Right cardiac atrium (tissue), 5 donors: ENCODE measurements at regions of chr10 and their contacts with region 1.

Region 1: GRCh38 chr10:18214691-18215563 is 74.7 kb downstream of the CACNB2 start:
- DNase-seq: peak in 2 of 3 donors; percentile 16 to 42
- ATAC-seq: peak; percentile 68 to 69
- H3K4me3 ChIP-seq: no peak overlapping the region
- H3K27ac ChIP-seq: no peak overlapping the region
- H3K4me1 ChIP-seq: peaks cover 1% of the 10 kb centered on the region
- H3K27me3 ChIP-seq: no peaks in the 10 kb centered on the region

Region 2: GRCh38 chr10:17847585-17848296 is 367.2 kb before region 1 on chr10:
- intact Hi-C with region 1: loop called (anchors 5 to 10 kb)
- DNase-seq: no peak
- ATAC-seq: no peak
- H3K4me3 ChIP-seq: no peak overlapping the region
- H3K27ac ChIP-seq: no peak overlapping the region
- H3K4me1 ChIP-seq: no peaks in the 10 kb centered on the region
- H3K27me3 ChIP-seq: no peaks in the 10 kb centered on the region

Region 3: DNA sequence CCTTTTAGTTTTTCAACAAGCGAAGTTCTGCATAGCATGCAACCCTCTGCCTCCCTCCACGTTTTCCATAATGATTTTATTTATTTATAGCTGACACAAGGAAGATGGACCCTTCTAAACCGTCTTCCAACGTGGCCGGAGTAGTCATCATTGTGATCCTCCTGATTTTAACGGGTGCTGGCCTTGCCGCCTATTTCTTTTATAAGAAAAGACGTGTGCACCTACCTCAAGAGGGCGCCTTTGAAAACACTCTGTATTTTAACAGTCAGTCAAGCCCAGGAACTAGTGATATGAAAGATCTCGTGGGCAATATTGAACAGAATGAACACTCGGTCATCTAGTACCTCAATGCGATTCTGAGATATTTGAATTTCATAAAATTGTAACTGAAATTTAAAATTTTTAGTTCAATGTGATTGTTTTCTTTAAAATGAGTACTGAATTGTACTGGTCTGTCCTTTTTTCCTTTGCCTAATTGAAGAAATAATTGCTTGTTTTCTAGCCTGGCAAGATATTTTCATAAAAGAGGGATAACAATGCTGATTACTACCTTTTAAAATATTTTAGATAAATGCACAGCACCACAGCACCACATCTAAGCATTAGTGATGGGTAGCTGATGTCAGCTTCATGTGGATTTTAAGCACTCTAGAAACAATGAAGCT is 304.7 kb before region 1 on chr10:
- intact Hi-C with region 1: loop called in 2 of 4 experiments (anchors 10 kb)
- DNase-seq: peak in 2 of 3 donors; percentile 13 to 47
- ATAC-seq: no peak
- H3K4me3 ChIP-seq: no peak overlapping the region
- H3K27ac ChIP-seq: no peak overlapping the region
- H3K4me1 ChIP-seq: no peaks in the 10 kb centered on the region
- H3K27me3 ChIP-seq: no peaks in the 10 kb centered on the region

Region 4: GRCh38 chr10:18117276-18117675 is 97.7 kb before region 1 on chr10:
- intact Hi-C with region 1: no loop called
- DNase-seq: no peak
- ATAC-seq: no peak
- H3K4me3 ChIP-seq: no peak overlapping the region
- H3K27ac ChIP-seq: no peak overlapping the region
- H3K4me1 ChIP-seq: no peaks in the 10 kb centered on the region
- H3K27me3 ChIP-seq: no peaks in the 10 kb centered on the region

Region 5: GRCh38 chr10:18140149-18140956 is 74.6 kb before region 1 on chr10 and contains the start of gene CACNB2:
- intact Hi-C with region 1: loop called in 2 of 4 experiments (anchors 10 kb)
- DNase-seq: peak; percentile 68 to 90 (median 89)
- ATAC-seq: peak; percentile 81 to 82
- H3K4me3 ChIP-seq: peak within 1 kb of the TSS; percentile 67
- H3K27ac ChIP-seq: peak within 1 kb of the TSS; percentile 68
- H3K4me1 ChIP-seq: no peaks in the 10 kb centered on the region
- H3K27me3 ChIP-seq: no peaks in the 10 kb centered on the region
- total RNA-seq, gene CACNB2: 37.5 to 51.1 (median 41.8) TPM

Region 6: DNA sequence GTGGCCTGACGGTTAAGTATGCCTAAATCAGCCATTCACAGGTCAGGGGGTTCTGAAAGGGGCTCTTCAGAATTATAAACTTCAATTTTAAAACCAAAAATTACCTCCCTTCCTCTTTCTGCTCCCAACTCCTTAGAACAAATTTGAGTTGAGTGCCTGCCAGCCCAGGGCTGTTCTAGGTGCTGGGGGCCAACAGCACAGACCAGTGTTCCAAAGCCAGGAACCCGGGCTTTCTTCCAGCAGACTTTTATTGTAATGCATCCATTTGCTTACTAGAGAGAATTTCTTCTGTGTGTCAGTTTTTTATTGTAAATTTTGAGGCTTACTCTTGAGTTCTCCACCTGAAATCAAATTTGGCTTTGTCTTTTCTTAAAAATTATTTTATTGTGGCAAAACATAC is 163.8 kb after region 1 on chr10:
- intact Hi-C with region 1: no loop called
- DNase-seq: peak in 1 of 3 donors; percentile 51
- ATAC-seq: peak; percentile 50 to 63
- H3K4me3 ChIP-seq: no peak overlapping the region
- H3K27ac ChIP-seq: no peak overlapping the region
- H3K4me1 ChIP-seq: no peaks in the 10 kb centered on the region
- H3K27me3 ChIP-seq: no peaks in the 10 kb centered on the region

Region 7: DNA sequence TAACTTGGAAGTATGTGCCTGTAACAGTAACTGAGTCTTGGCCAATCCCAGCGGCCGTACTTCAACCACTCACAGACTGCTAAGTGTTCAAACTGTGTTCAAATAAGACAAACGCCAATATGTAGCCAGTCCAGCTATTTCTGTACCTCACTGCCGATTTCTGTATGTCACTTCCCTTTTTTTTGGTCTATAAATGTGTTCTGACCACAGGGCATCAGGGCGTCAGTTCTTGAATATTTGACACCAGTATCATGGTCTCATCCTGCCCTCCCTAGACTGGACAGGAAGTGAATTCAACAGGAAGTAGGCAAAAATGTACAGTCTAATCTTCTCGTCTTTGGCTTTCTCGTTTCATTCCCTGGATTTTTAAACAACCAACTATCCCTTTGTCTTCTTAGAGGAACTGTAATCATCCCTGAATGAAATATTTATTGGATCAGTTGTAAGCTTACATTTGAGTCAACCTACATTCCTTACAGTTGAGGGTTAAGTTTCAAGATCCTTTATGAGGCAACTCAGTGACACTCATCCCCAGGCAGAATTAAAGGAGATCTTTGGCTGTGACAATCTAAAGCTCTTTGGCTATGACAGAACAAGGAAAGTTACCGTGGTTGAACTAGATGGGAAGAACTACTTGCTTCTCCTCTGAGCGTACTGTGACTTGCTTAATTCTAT is 203.8 kb after region 1 on chr10:
- intact Hi-C with region 1: no loop called
- DNase-seq: no peak
- ATAC-seq: peak in 1 of 2 donors; percentile 41
- H3K4me3 ChIP-seq: no peak overlapping the region
- H3K27ac ChIP-seq: peak overlapping the region; percentile 42
- H3K4me1 ChIP-seq: no peaks in the 10 kb centered on the region
- H3K27me3 ChIP-seq: no peaks in the 10 kb centered on the region